ENCODE measurements at regions of chr2 and their contacts with region 1.

Region 1: DNA sequence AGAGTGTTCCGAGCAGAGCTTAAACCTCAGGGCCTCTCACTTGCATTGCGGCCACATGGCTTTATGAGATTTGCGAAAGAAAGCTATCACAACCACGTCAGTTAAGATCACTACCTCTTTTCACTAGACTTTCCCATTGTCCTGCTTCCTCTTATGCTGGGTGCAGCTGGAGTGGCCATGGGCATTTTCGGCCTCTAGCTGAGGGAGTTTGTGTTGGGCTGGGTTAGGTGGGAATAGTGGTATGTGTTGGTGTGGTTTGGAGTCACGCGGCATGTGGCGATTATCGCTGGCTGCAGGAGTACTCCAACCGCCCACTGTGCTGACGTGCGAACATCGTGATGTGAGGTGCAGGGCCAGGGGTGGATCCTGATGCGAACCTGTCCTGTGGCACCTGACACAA is 27.1 kb downstream of the RALB start:
- DNase-seq: no peak
- H3K4me3 ChIP-seq: no peak overlapping the region
- H3K27ac ChIP-seq: no peak overlapping the region
- H3K4me1 ChIP-seq: peaks cover 4 to 13% (median 8%) of the 10 kb centered on the region in 4 experiments; a peak in 6 of 7 replicates
- H3K27me3 ChIP-seq: no peaks in the 10 kb centered on the region; a peak in 2 of 7 replicates
- CTCF ChIP-seq: no peak
- EP300 ChIP-seq: no peak
- POLR2A ChIP-seq: no peak
- RAD21 ChIP-seq: no peak

Region 2: DNA sequence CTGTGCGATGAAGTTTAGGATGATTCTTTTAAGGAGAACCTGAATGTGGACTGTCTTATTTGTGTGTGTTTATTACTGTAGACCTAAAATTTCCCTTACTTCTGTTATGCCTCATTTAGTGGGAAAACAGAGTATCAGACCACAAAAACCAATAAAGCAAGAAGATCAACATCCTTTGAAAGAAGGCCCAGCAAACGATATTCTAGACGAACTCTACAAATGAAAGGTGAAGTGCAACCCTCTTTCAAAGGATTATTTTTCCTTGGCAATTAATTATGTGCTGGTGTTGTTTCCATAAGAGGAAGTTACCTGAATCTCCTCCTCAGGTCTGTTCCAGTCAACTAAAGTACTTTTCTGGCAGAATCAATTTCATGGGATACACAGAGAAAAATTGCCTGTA is 188.3 kb before region 1 on chr2:
- CTCF ChIA-PET with region 1: no interaction called
- POLR2A ChIA-PET with region 1: no interaction called
- DNase-seq: no peak
- H3K4me3 ChIP-seq: no peak overlapping the region
- H3K27ac ChIP-seq: no peak overlapping the region
- H3K4me1 ChIP-seq: no peaks in the 10 kb centered on the region
- H3K27me3 ChIP-seq: no peaks in the 10 kb centered on the region
- CTCF ChIP-seq: no peak
- EP300 ChIP-seq: no peak
- POLR2A ChIP-seq: no peak
- RAD21 ChIP-seq: no peak

Region 3: DNA sequence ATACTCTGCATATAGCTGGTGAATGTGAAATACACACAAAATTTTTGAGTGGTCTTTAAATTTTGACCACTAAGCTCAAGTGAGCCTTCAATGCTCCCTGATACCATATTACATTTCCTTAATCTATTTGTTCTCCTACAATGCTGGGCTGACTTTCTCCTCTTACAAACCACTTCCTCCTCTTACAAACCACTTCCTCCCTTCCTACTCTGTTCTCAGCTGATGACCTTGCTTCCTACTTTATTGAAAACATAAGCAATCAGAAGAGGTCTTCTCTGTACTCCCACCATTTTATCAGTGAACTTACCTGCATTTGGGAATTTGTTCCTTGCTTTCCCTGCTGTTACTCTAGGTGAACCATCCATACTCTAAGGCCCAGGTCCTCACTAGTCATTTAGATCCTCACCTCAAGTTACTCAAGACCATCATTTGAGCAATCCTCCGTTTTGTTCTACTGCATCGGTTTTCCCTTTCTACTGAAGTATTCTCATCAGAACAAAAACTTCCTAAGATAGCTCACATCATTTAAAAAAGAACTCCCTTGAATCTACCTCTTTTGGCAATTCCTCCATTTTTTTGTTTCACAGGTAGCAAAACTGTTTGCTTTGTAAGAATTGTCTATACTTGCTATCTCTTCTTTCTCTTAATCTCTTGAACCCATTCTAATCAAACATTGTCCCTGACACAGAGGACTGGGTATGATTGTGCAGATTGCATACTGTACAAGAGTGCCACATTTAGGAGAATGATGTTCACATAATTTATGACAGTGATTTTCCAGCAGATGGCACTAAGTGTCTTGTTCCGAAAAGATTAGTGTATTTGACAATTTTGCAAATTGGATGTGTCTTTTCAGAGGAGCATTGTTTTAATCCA is 170.3 kb before region 1 on chr2:
- CTCF ChIA-PET with region 1: no interaction called
- POLR2A ChIA-PET with region 1: no interaction called
- DNase-seq: no peak
- H3K4me3 ChIP-seq: no peak overlapping the region
- H3K27ac ChIP-seq: no peak overlapping the region
- H3K4me1 ChIP-seq: no peaks in the 10 kb centered on the region
- H3K27me3 ChIP-seq: no peaks in the 10 kb centered on the region
- CTCF ChIP-seq: no peak
- EP300 ChIP-seq: no peak
- POLR2A ChIP-seq: no peak
- RAD21 ChIP-seq: no peak

Region 4: GRCh38 chr2:120294008-120294340 is 14.3 kb after region 1 on chr2:
- CTCF ChIA-PET with region 1: interaction called, 28 read pairs
- POLR2A ChIA-PET with region 1: interaction called, 5 read pairs
- DNase-seq: no peak
- H3K4me3 ChIP-seq: no peak overlapping the region
- H3K27ac ChIP-seq: no peak overlapping the region
- H3K4me1 ChIP-seq: peaks cover 0 to 20% (median 15%) of the 10 kb centered on the region in 4 experiments
- H3K27me3 ChIP-seq: no peaks in the 10 kb centered on the region
- CTCF ChIP-seq: no peak
- EP300 ChIP-seq: no peak
- POLR2A ChIP-seq: no peak
- RAD21 ChIP-seq: no peak

Region 5: GRCh38 chr2:120396013-120396885 is 116.5 kb after region 1 on chr2:
- CTCF ChIA-PET with region 1: no interaction called
- POLR2A ChIA-PET with region 1: no interaction called
- DNase-seq: peak in 1 of 2 experiments; percentile 45
- H3K4me3 ChIP-seq: no peak overlapping the region
- H3K27ac ChIP-seq: no peak overlapping the region
- H3K4me1 ChIP-seq: peaks cover 0 to 14% (median 0%) of the 10 kb centered on the region in 4 experiments; a peak in 3 of 7 replicates
- H3K27me3 ChIP-seq: peaks cover 0 to 6% (median 0%) of the 10 kb centered on the region in 4 experiments; a peak in 4 of 7 replicates
- CTCF ChIP-seq: no peak
- EP300 ChIP-seq: no peak
- POLR2A ChIP-seq: no peak
- RAD21 ChIP-seq: no peak